Panc1 (cell line): ENCODE measurements at regions of chr9 and their contacts with region 1.

Region 1: GRCh38 chr9:69971643-69972449 is 71.8 kb upstream of the MAMDC2 start:
- DNase-seq: peak; percentile 41
- ATAC-seq: peak; percentile 79
- H3K4me3 ChIP-seq: no peak overlapping the region
- H3K27ac ChIP-seq: no peak overlapping the region
- H3K4me1 ChIP-seq: no peaks in the 10 kb centered on the region
- H3K27me3 ChIP-seq: no peaks in the 10 kb centered on the region
- CTCF ChIP-seq: peak; percentile 85

Region 2: GRCh38 chr9:70013598-70014196 is 41.9 kb after region 1 on chr9:
- CTCF ChIA-PET with region 1: no interaction called
- POLR2A ChIA-PET with region 1: no interaction called
- in situ Hi-C with region 1: no loop called
- intact Hi-C with region 1: loop called (anchors 5 kb)
- DNase-seq: no peak
- ATAC-seq: no peak
- H3K4me3 ChIP-seq: no peak overlapping the region
- H3K27ac ChIP-seq: no peak overlapping the region
- H3K4me1 ChIP-seq: no peaks in the 10 kb centered on the region
- H3K27me3 ChIP-seq: no peaks in the 10 kb centered on the region
- CTCF ChIP-seq: no peak

Region 3: GRCh38 chr9:70111042-70111602 is 139.3 kb after region 1 on chr9:
- CTCF ChIA-PET with region 1: interaction called, 8 read pairs
- POLR2A ChIA-PET with region 1: no interaction called
- in situ Hi-C with region 1: no loop called
- intact Hi-C with region 1: loop called (anchors 2 kb)
- DNase-seq: no peak
- ATAC-seq: peak; percentile 78
- H3K4me3 ChIP-seq: no peak overlapping the region
- H3K27ac ChIP-seq: no peak overlapping the region
- H3K4me1 ChIP-seq: no peaks in the 10 kb centered on the region
- H3K27me3 ChIP-seq: no peaks in the 10 kb centered on the region
- CTCF ChIP-seq: peak; percentile 82

Region 4: DNA sequence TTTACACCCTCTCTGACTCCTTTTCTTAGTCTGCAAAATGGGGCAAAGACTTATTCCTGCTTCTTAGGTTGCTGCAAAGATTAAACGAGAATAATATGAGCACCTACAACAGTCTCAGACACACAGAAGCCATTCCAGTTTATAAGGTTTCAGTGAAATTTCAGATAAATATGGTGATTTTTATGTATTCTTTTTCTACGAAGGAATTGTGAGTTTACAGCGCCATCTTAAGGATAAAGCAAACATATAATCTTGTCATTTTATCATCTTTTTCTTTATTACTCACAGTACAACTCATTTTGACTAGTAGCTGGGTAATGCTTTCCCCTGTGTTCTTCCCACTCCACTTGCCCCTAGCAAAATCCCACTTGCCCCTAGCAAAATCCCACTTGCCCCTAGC is 257.7 kb after region 1 on chr9:
- CTCF ChIA-PET with region 1: no interaction called
- POLR2A ChIA-PET with region 1: no interaction called
- in situ Hi-C with region 1: no loop called
- intact Hi-C with region 1: loop called (anchors 2 kb)
- DNase-seq: no peak
- ATAC-seq: no peak
- H3K4me3 ChIP-seq: no peak overlapping the region
- H3K27ac ChIP-seq: no peak overlapping the region
- H3K4me1 ChIP-seq: no peaks in the 10 kb centered on the region
- H3K27me3 ChIP-seq: no peaks in the 10 kb centered on the region
- CTCF ChIP-seq: peak; percentile 13; the same call in 1 of the 2 replicates

Region 5: DNA sequence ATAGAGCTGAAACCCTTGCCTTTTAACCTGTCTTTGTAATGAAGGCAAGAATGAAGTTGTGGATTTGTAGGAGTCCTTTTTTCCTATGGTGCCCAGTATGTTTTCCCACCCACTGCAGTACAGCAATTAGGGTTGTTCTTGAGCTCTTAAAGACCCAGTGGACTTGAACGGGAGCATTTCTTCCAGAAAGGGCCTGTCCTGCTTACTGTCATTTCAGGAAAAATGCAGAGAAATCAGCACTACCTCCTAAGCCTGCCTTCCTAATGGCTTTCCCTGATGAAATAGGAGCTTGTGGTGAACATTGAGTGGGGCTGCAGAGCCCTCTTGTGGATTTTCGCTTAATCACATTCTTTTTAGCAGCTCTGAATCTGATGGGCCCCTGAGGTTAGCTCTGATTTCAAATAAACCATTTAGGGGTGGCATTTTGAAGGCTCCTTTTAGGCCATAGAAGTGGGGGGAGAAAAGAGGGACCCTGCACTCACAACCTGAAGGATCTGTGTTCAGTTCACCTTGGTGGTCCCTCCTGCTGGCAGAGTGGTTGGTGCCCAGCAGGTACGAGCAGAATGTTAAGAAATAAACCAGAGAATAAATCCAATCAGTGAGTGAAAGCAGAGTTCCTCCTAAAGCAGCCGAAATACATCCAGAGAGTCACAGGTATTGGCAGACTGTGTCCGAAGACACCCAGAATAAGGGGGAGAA is 630.6 kb after region 1 on chr9:
- CTCF ChIA-PET with region 1: no interaction called
- POLR2A ChIA-PET with region 1: no interaction called
- in situ Hi-C with region 1: no loop called
- intact Hi-C with region 1: loop called (anchors 5 kb)
- DNase-seq: peak; percentile 39
- ATAC-seq: peak; percentile 77
- H3K4me3 ChIP-seq: no peak overlapping the region
- H3K27ac ChIP-seq: no peak overlapping the region
- H3K4me1 ChIP-seq: no peaks in the 10 kb centered on the region
- H3K27me3 ChIP-seq: no peaks in the 10 kb centered on the region
- CTCF ChIP-seq: peak; percentile 79